ENCODE measurements at regions of chr17 and their contacts with region 1.

Region 1: GRCh38 chr17:14135906-14136590 is 66.7 kb downstream of the COX10 start:
- DNase-seq: no peak
- H3K4me3 Mint-ChIP-seq: no peak overlapping the region
- H3K27ac Mint-ChIP-seq: peak overlapping the region; percentile 28
- H3K4me1 Mint-ChIP-seq: peaks cover 12% of the 10 kb centered on the region
- H3K27me3 Mint-ChIP-seq: no peaks in the 10 kb centered on the region

Region 2: DNA sequence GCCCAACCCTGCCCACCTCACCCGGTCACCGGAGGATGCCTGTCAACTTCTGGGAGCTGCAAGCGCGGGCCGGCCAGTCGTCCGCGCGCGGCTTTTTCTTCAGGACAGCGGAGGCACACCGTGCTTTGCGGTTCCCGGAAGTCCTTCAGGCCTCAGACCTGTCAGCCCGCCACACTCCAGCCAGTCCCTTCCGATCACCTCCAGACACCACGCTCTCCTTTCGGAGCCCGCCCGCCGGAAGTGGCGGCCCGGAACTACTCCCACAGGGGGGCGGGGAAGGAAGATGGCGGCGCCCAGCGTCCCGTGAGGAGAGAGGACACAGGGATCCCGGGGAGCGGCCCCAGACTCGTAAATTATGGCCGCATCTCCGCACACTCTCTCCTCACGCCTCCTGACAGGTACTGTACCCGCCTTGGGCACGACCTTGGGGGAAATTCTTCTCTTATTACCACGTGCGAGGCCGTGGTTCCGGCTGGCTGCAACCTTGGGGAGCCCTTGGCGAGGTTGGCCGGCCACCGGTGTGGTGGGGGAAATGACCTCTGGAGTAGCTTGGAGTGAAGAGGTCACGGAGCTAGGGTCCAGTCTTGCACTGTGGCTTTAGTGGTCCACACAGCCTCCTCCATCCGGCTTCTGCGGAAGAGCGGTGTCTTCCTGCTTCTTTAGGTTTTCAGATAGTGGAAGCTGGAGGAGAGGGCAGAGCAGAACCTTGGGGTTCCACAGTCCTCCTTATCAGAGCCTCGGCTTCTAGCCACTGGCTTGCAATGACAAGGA is 66.6 kb before region 1 on chr17 and contains the start of gene COX10:
- intact Hi-C with region 1: no loop called
- DNase-seq: peak; percentile 97
- H3K4me3 Mint-ChIP-seq: peak within 1 kb of the TSS; percentile 96
- H3K27ac Mint-ChIP-seq: peak within 1 kb of the TSS; percentile 94
- H3K4me1 Mint-ChIP-seq: peaks cover 48% of the 10 kb centered on the region
- H3K27me3 Mint-ChIP-seq: no peaks in the 10 kb centered on the region
- total RNA-seq, gene COX10: 33.5 and 36.1 TPM in 2 replicates

Region 3: DNA sequence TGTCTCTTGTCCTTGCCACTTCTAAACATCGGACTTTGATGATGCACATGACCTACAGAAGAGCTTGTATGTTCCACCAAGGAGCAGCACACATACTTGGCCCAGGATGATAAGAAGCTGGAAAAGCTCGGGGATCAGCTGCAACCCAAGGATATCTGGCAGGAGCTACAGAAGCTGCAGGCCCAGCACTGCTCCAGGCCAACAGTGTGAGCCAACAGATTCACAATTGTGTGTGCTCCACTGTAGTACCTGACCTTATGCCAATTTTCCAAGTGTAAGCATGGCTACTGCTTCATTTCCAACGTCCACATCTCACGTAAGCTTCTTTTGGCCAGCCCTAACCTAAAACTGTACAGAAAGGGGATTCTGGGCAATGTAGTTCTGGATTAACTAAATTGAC is 16.7 kb after region 1 on chr17:
- intact Hi-C with region 1: loop called (anchors 2 kb)
- DNase-seq: no peak
- H3K4me3 Mint-ChIP-seq: no peak overlapping the region
- H3K27ac Mint-ChIP-seq: no peak overlapping the region
- H3K4me1 Mint-ChIP-seq: peaks cover 23% of the 10 kb centered on the region
- H3K27me3 Mint-ChIP-seq: no peaks in the 10 kb centered on the region

Region 4: GRCh38 chr17:14165616-14166015 is 29.6 kb after region 1 on chr17:
- intact Hi-C with region 1: no loop called
- DNase-seq: no peak
- H3K4me3 Mint-ChIP-seq: no peak overlapping the region
- H3K27ac Mint-ChIP-seq: peak overlapping the region; percentile 10
- H3K4me1 Mint-ChIP-seq: peaks cover 18% of the 10 kb centered on the region
- H3K27me3 Mint-ChIP-seq: no peaks in the 10 kb centered on the region

Measured in activated CD4-positive, alpha-beta T cell treated with anti-CD3 and anti-CD28 coated beads, Interleukin-2, amount 10 ng/mL, durations not matched to agents 24 days and 14 days (primary cell).